ENCODE measurements at regions of chr14 and their contacts with region 1.

Region 1: DNA sequence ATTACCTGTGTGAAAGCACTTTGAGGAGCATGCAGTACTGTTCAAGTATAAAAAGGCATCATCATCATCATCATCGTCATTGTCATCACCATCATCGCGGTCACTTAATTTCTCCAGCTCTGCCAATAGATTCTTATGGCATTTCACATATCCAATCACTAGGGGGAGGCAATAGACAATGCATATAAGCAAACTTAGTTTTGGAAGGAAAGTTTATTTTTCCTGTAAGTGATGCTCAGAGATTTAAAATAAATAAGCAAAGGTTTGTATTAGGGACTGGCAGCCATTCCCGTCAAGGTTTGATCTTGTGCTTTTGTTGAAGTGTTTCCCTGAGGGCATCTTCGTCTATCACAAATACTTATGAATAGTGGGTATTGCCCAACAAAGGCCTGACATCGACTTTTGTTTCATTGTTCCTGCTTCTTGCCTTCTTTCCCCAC is 127.4 kb downstream of the KTN1 start:
- DNase-seq: no peak
- H3K4me3 ChIP-seq: no peak overlapping the region
- H3K27ac ChIP-seq: no peak overlapping the region
- H3K4me1 ChIP-seq: peaks cover 8% of the 10 kb centered on the region
- H3K27me3 ChIP-seq: no peaks in the 10 kb centered on the region
- CTCF ChIP-seq: peak; percentile 69

Region 2: GRCh38 chr14:56474419-56475022 is 767.1 kb after region 1 on chr14:
- intact Hi-C with region 1: loop called (anchors 10 kb)
- DNase-seq: no peak
- H3K4me3 ChIP-seq: no peak overlapping the region
- H3K27ac ChIP-seq: no peak overlapping the region
- H3K4me1 ChIP-seq: no peaks in the 10 kb centered on the region
- H3K27me3 ChIP-seq: peaks cover 19% of the 10 kb centered on the region
- CTCF ChIP-seq: peak; percentile 89